ENCODE measurements at regions of chr1 and their contacts with region 1.

Region 1: GRCh38 chr1:8348777-8349491 is 31.0 kb downstream of the SLC45A1 start:
- DNase-seq: peak; percentile 65
- H3K4me3 ChIP-seq: no peak overlapping the region
- H3K27ac ChIP-seq: no peak overlapping the region
- H3K4me1 ChIP-seq: no peaks in the 10 kb centered on the region
- H3K27me3 ChIP-seq: no peaks in the 10 kb centered on the region
- CTCF ChIP-seq: peak; percentile 86

Region 2: DNA sequence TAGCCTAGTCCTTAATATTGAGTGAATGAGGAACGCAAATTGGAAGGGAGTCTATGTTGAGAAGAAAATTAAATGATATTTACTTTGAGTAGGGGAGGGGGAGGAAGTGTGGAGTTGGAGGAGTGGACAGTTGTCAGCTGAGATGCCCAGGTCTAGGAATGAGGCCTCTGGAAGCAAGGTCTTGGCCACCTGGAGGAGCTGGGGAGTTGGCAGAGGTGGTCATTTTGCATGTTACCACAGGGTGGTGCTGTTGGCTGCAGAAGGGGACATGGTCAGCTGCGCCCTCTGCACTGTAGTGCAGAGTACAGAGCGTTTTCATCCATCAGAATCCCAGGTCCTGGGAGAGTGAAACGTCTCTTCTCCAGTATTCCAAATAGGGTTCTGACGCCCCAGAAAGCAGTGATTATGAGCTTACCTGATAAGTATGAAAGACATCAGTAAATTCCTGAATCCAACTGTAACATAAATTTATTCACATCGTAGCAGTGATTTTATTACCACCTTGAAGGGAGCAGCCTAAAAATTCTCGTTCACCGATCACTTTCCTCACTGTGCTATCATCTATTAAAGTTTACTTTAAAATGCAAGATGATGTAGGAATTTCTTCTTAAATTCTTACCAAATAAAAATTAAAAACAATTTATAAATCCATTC is 373.6 kb before region 1 on chr1:
- intact Hi-C with region 1: loop called (anchors 5 kb)
- DNase-seq: peak; percentile 81
- H3K4me3 ChIP-seq: no peak overlapping the region
- H3K27ac ChIP-seq: no peak overlapping the region
- H3K4me1 ChIP-seq: no peaks in the 10 kb centered on the region
- H3K27me3 ChIP-seq: no peaks in the 10 kb centered on the region
- CTCF ChIP-seq: peak; percentile 72